Activated CD8-positive, alpha-beta T cell treated with anti-CD3 and anti-CD28 coated beads for 36 hours (primary cell): ENCODE measurements at regions of chr7 and their contacts with region 1.

Region 1: DNA sequence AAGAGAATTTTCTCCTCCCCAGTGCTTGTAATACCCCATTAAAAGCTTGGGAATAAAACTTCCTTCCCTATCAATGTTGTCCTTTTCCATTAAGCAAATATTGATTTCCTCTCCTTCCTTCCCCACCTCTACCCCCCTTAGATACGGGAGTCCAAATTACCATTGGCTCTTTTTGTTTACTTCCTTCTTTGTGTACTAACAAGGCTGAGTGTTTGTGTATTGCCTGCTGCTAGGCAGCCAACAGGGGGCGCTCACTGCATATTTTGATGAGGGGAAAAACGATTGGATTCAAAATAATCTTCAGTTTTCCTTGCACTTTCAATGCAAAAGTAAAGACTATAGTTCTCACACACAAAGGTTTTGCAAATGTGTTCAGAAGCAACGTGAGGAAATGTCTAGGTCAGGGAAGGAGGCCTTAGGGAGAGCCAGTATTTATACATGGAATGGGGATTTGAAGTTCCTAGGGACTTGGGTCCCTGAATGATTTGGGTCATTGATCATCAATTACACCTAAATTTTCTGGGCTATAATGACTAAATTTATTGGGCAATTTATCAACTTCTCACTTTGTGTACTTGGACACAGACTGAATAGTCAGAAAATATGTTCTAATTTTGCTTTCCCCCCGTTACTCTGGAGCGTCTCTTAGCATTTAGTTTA is 23.6 kb upstream of the VPS41 start:
- DNase-seq: peak; percentile 73
- ATAC-seq: no peak
- H3K4me3 Mint-ChIP-seq: no peak overlapping the region
- H3K27ac Mint-ChIP-seq: no peak overlapping the region
- H3K4me1 Mint-ChIP-seq: no peaks in the 10 kb centered on the region
- H3K27me3 Mint-ChIP-seq: peaks cover 2% of the 10 kb centered on the region
- CTCF ChIP-seq: peak; percentile 94

Region 2: DNA sequence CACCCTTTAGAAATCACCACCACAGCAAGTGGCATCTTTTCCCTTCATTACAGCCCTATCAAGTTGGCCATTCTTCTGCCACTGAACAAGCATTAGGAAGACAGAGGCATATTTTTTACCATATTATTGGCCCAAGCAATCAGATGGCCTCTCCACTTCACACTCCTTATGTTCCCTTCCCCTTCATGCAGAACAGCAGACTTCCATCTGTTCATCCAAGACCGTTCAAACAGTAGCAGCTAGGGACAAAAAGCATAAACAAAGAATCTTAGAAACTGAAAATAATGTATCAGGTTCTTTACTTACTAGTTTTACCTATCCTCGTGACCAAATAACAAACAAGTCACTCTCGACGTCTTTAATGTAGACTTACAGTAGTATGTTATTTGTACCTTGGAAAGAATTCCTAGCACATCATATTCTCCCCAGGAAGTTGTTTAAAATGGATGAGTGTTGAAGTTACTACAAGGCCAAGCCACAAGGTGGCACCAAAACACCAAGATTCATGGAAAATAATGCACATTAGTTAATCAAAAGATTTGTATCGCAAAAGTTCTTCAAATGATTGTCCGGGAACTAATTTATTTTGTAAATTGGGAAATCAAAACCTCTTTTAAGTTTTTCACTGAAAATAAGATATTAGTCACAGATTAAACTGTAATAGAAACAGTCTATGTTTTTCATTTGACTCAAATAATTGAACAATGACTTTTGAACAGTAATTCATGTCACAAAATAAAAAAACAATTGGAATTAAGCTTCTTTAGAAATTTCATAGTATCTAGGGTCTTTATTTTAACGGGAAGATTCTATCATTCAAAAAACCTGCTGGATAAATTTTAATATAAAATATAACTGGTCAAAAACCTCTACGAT is 135.8 kb before region 1 on chr7:
- CTCF ChIA-PET with region 1: interaction called, 3 read pairs
- POLR2A ChIA-PET with region 1: no interaction called
- intact Hi-C with region 1: loop called (anchors 10 kb)
- DNase-seq: peak; percentile 60
- ATAC-seq: no peak
- H3K4me3 Mint-ChIP-seq: no peak overlapping the region
- H3K27ac Mint-ChIP-seq: no peak overlapping the region
- H3K4me1 Mint-ChIP-seq: no peaks in the 10 kb centered on the region
- H3K27me3 Mint-ChIP-seq: no peaks in the 10 kb centered on the region
- CTCF ChIP-seq: peak; percentile 86

Region 3: DNA sequence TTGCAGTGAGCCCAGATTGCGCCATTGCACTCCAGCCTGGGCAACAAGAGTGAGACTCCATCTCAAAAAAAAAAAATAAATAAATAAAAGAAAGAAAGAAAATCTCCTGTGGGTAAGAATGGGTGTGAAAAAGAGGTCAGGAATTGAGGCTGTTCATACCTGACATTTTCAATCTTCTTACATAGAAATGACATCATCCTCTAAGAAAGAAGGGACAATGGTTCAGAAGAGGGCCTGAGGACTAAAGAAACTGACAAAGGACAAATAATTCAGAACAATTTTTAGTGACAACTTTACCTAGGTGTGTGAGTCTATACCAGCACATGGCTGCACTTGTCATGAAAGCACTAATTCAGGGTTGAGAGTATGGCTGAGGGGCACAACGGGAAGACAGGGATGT is 65.2 kb before region 1 on chr7:
- CTCF ChIA-PET with region 1: no interaction called
- POLR2A ChIA-PET with region 1: no interaction called
- intact Hi-C with region 1: no loop called
- DNase-seq: no peak
- ATAC-seq: no peak
- H3K4me3 Mint-ChIP-seq: no peak overlapping the region
- H3K27ac Mint-ChIP-seq: no peak overlapping the region
- H3K4me1 Mint-ChIP-seq: no peaks in the 10 kb centered on the region
- H3K27me3 Mint-ChIP-seq: no peaks in the 10 kb centered on the region
- CTCF ChIP-seq: no peak

Region 4: GRCh38 chr7:38893061-38893460 is 39.6 kb before region 1 on chr7:
- CTCF ChIA-PET with region 1: no interaction called
- POLR2A ChIA-PET with region 1: no interaction called
- intact Hi-C with region 1: no loop called
- DNase-seq: no peak
- ATAC-seq: no peak
- H3K4me3 Mint-ChIP-seq: no peak overlapping the region
- H3K27ac Mint-ChIP-seq: no peak overlapping the region
- H3K4me1 Mint-ChIP-seq: peaks cover 10% of the 10 kb centered on the region
- H3K27me3 Mint-ChIP-seq: no peaks in the 10 kb centered on the region
- CTCF ChIP-seq: no peak

Region 5: DNA sequence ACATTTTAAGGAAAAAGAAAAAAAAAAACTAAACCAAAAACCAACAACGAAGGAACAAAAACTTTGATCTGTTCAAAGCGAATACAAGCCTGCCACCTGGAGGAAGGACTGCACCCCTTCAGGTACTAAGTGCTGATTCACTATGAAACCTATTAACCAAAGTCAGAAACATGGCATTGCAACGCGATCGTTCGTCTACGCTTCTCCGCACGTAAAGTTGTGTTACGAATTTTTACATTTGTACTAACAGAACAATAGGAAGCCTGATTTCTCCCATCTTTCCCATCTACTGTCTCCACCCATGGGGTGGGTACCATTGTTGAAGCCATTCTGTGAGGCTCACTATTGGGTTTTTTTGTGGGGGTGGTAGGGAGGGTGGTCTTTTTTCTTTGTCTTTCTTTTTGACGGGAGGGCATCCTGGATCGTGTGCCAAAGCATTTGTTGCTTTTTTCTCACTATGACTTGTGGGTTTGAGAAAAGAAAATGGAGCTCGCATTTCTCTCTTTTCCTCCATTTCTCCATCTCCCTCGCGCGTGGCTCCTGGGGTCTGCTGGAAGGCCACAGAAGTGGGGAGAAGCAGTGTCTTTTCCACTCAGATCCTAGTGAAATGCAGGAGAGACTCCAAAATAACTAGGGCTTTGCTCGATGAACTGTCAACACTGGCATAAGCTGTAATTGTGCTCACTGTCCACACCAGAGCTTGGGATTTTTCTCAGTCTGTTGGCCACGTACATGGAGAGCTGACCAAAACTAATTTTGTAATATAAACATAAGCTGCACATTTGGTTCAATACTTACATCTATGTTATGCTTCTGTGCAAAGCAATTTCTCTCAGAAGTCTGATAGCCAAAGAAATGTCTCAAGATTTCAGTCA is 532.7 kb after region 1 on chr7:
- CTCF ChIA-PET with region 1: no interaction called
- POLR2A ChIA-PET with region 1: no interaction called
- intact Hi-C with region 1: loop called (anchors 10 kb)
- DNase-seq: peak; percentile 68
- ATAC-seq: peak; percentile 90
- H3K4me3 Mint-ChIP-seq: no peak overlapping the region
- H3K27ac Mint-ChIP-seq: no peak overlapping the region
- H3K4me1 Mint-ChIP-seq: peaks cover 7% of the 10 kb centered on the region
- H3K27me3 Mint-ChIP-seq: peaks cover 3% of the 10 kb centered on the region
- CTCF ChIP-seq: peak; percentile 86

Region 6: GRCh38 chr7:39510864-39511354 is 578.3 kb after region 1 on chr7:
- CTCF ChIA-PET with region 1: no interaction called
- POLR2A ChIA-PET with region 1: no interaction called
- intact Hi-C with region 1: loop called (anchors 10 kb)
- DNase-seq: peak; percentile 61
- ATAC-seq: peak; percentile 71
- H3K4me3 Mint-ChIP-seq: no peak overlapping the region
- H3K27ac Mint-ChIP-seq: no peak overlapping the region
- H3K4me1 Mint-ChIP-seq: peaks cover 28% of the 10 kb centered on the region
- H3K27me3 Mint-ChIP-seq: peaks cover 2% of the 10 kb centered on the region
- CTCF ChIP-seq: no peak